ENCODE measurements at regions of chr15 and their contacts with region 1.

Region 1: DNA sequence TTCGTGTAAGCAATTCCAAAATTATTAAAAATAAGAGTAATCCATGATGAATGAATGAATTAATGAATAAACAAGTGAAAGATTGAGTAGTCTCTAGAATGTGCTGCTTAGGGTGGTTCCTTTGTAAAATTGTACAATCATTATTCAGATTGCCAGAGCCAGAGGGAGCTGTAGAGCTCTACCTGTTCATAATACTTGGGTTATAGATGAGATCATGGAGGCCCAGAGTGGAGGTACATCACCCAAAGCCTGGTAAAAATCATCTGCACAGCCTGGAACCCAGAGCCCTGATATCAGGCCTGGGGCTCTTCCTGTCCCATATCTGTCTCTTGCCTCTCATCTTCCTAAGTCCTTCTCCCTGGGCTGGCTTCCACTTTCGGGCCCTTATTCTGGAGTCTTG is 297.2 kb downstream of the RPLP1 start:
- DNase-seq: no peak
- H3K4me3 Mint-ChIP-seq: no peak overlapping the region
- H3K27ac Mint-ChIP-seq: no peak overlapping the region
- H3K4me1 Mint-ChIP-seq: peaks cover 69% of the 10 kb centered on the region
- H3K27me3 Mint-ChIP-seq: peaks cover 13% of the 10 kb centered on the region

Region 2: GRCh38 chr15:69719527-69720240 is 30.1 kb before region 1 on chr15:
- CTCF ChIA-PET with region 1: interaction called, 12 read pairs
- POLR2A ChIA-PET with region 1: no interaction called
- DNase-seq: peak; percentile 65
- H3K4me3 Mint-ChIP-seq: no peak overlapping the region
- H3K27ac Mint-ChIP-seq: peak overlapping the region; percentile 79
- H3K4me1 Mint-ChIP-seq: peaks cover 95% of the 10 kb centered on the region
- H3K27me3 Mint-ChIP-seq: peaks cover 12% of the 10 kb centered on the region

Region 3: DNA sequence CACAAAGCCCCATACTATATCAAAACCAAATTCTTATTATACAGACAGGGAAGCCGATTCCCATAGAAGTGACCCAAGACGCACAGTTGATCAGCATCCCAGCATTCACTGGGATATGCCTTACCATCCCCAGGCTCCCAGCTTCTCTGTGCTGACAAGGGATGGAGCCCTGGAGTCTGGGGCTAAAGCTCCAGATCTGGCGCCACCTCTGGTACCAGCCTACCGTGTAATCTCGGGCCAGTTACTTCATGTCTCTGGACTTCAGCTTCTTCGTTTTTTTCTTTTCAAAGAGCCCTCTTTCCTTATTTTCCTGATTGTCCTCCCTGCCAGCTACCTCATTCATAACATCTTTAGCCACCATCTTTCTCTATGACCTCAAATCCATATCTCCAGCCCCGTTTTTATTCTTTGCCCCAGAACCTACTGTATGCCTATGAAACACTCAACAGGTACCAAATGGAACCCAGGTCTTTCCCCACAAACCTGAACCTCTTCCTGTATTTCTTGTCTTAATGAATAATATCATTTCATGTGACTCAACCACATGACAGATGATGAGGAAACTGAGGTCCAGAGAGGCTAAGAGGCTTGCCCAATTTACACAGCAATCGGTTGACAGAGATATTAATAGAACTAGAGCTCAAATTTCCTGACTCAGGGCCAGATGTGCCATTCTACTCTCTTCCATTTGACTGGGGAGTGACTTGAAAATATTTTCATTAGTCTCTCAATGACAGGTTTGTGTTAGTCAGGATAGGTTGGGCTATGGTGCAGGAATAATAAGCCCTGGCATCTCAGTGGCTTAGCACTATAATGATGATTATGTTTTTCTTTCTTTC is 433.3 kb after region 1 on chr15:
- CTCF ChIA-PET with region 1: no interaction called
- POLR2A ChIA-PET with region 1: no interaction called
- DNase-seq: no peak
- H3K4me3 Mint-ChIP-seq: no peak overlapping the region
- H3K27ac Mint-ChIP-seq: no peak overlapping the region
- H3K4me1 Mint-ChIP-seq: peaks cover 2% of the 10 kb centered on the region
- H3K27me3 Mint-ChIP-seq: peaks cover 6% of the 10 kb centered on the region

Measured in activated CD4-positive, alpha-beta T cell treated with anti-CD3 and anti-CD28 coated beads, Interleukin-2, amount 10 ng/mL, durations not matched to agents 7 days and 5 days (primary cell).